ENCODE measurements at regions of chr3 and their contacts with region 1.

Region 1: GRCh38 chr3:39288300-39288808 is 8.5 kb upstream of the CX3CR1 start:
- DNase-seq: peak; percentile 91
- H3K4me3 Mint-ChIP-seq: no peak overlapping the region
- H3K27ac Mint-ChIP-seq: no peak overlapping the region
- H3K4me1 Mint-ChIP-seq: peaks cover 12% of the 10 kb centered on the region
- H3K27me3 Mint-ChIP-seq: no peaks in the 10 kb centered on the region

Region 2: DNA sequence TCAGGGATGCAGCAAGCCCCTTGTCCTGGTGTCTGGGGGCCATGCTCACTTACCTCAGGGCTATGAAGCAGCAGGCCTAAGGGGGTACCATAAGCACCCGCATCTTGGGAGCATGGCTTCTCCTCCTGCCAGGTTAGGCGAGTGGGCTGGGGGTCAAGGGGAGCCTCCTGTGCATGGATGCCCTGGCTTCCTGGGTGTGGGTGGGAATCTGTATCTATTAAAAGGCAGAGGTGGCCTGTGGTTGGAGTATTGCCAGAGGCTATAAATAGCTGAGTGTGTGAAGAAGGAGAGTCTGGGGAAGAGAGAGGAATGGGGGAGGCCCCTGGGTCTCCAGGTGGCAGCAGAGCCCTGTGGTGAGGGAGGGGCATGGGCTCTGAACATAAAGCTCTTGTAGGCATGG is 815.1 kb before region 1 on chr3:
- CTCF ChIA-PET with region 1: no interaction called
- intact Hi-C with region 1: no loop called
- DNase-seq: no peak
- H3K4me3 Mint-ChIP-seq: no peak overlapping the region
- H3K27ac Mint-ChIP-seq: no peak overlapping the region
- H3K4me1 Mint-ChIP-seq: peaks cover 8% of the 10 kb centered on the region
- H3K27me3 Mint-ChIP-seq: no peaks in the 10 kb centered on the region

Region 3: GRCh38 chr3:38782148-38782547 is 506.2 kb before region 1 on chr3:
- CTCF ChIA-PET with region 1: no interaction called
- intact Hi-C with region 1: no loop called
- DNase-seq: no peak
- H3K4me3 Mint-ChIP-seq: no peak overlapping the region
- H3K27ac Mint-ChIP-seq: no peak overlapping the region
- H3K4me1 Mint-ChIP-seq: no peaks in the 10 kb centered on the region
- H3K27me3 Mint-ChIP-seq: peaks cover 4% of the 10 kb centered on the region

Region 4: GRCh38 chr3:39000008-39000450 is 288.3 kb before region 1 on chr3:
- CTCF ChIA-PET with region 1: interaction called, 3 read pairs
- intact Hi-C with region 1: loop called (anchors 1 kb)
- DNase-seq: no peak
- H3K4me3 Mint-ChIP-seq: no peak overlapping the region
- H3K27ac Mint-ChIP-seq: no peak overlapping the region
- H3K4me1 Mint-ChIP-seq: no peaks in the 10 kb centered on the region
- H3K27me3 Mint-ChIP-seq: no peaks in the 10 kb centered on the region

Region 5: DNA sequence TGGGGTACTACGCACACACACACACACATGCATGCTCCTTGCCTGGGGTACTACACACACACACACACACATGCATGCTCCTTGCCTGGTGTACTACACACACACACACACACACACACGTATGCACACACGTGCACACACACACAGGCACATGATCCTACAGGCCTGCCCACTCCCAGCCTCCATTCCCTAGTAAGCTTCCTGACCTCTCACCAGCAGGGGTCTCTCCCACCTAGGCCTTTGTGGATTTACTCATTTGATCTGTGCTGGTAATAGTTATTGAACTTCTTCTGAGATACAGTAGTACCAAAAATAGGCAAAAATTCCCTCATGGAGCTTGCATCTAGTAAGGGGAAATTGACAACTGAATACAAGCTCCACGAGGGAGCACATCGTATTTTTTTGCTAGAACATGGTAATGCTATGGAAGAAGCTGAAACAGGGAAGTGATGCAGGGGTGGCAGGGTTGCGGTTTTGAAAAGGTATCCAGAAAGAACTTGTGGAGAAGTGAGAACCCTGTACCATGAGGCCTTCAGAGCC is 161.8 kb before region 1 on chr3:
- CTCF ChIA-PET with region 1: interaction called, 169 read pairs
- intact Hi-C with region 1: loop called (anchors 1 kb)
- DNase-seq: peak; percentile 80
- H3K4me3 Mint-ChIP-seq: no peak overlapping the region
- H3K27ac Mint-ChIP-seq: no peak overlapping the region
- H3K4me1 Mint-ChIP-seq: peaks cover 18% of the 10 kb centered on the region
- H3K27me3 Mint-ChIP-seq: no peaks in the 10 kb centered on the region

Region 6: DNA sequence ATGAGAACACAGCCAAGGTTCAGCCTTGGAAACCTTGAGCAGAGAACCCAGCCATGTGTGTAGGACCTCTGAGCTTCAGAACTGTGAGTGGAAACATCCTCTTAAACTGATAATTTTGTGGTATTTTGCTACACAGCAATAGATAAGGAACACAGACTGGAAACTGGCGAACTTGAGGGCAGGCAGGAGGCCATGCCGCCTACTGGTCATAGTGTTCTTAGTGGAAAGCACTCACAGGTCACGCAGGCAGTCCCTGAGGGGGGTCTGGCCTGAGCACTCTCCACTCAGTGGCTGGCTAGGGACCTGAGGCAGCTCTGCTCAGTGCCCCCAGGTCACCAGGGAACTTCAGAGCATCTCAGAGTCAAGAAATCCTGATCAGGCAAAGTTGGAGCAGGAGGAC is 86.3 kb before region 1 on chr3:
- CTCF ChIA-PET with region 1: interaction called, 29 read pairs
- intact Hi-C with region 1: no loop called
- DNase-seq: no peak
- H3K4me3 Mint-ChIP-seq: no peak overlapping the region
- H3K27ac Mint-ChIP-seq: no peak overlapping the region
- H3K4me1 Mint-ChIP-seq: peaks cover 2% of the 10 kb centered on the region
- H3K27me3 Mint-ChIP-seq: no peaks in the 10 kb centered on the region

Region 7: DNA sequence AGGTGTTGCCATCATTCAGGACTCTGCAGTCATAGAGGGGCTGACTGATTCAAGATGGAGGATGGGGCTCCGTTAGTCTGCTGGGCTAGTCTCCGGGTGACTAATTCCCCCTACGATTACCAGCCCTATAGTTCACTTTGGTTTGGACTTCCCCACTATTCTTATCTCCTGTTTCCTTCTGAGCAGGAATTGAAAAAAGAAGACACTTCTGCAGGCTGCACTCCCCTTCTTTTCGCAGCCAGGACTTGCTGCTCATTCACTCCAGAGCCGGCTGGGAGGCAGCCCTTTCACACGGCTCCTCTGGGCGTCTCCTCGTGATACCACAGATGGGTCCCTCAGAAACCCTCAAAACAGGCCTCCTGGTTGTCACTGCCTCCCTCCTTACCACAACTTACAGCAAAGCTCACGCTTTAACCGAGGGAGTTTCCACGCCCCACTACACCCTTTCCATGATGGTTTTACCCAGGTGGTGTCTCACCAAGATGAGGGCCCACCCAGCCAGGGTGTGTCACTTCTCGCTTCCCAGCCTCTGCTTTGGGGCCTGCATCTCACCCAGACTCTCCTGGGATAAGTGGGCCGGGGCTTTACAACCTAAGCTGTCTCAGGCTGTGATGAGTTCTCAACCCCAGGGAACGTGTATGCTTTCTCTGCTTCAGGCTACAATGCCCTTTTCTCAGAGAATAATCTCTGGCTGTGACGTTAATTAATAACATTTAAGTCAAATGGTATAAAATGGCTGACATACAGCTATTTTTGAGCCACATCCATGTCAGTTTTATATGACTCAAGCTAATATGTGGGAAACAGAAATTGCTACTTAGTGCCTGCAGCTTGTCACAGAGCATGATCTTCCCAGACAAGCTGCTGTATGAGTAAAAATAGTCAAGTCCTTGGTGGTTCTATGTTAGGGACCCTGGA is 20.5 kb before region 1 on chr3:
- CTCF ChIA-PET with region 1: interaction called, 40 read pairs
- intact Hi-C with region 1: loop called (anchors 1 kb)
- DNase-seq: peak; percentile 83
- H3K4me3 Mint-ChIP-seq: peak overlapping the region; percentile 39
- H3K27ac Mint-ChIP-seq: peak overlapping the region; percentile 92
- H3K4me1 Mint-ChIP-seq: peaks cover 25% of the 10 kb centered on the region
- H3K27me3 Mint-ChIP-seq: no peaks in the 10 kb centered on the region

Region 8: GRCh38 chr3:39346785-39347585 is 58.6 kb after region 1 on chr3:
- CTCF ChIA-PET with region 1: interaction called, 21 read pairs
- intact Hi-C with region 1: no loop called
- DNase-seq: peak; percentile 20
- H3K4me3 Mint-ChIP-seq: no peak overlapping the region
- H3K27ac Mint-ChIP-seq: peak overlapping the region; percentile 37
- H3K4me1 Mint-ChIP-seq: peaks cover 43% of the 10 kb centered on the region
- H3K27me3 Mint-ChIP-seq: no peaks in the 10 kb centered on the region

Region 9: DNA sequence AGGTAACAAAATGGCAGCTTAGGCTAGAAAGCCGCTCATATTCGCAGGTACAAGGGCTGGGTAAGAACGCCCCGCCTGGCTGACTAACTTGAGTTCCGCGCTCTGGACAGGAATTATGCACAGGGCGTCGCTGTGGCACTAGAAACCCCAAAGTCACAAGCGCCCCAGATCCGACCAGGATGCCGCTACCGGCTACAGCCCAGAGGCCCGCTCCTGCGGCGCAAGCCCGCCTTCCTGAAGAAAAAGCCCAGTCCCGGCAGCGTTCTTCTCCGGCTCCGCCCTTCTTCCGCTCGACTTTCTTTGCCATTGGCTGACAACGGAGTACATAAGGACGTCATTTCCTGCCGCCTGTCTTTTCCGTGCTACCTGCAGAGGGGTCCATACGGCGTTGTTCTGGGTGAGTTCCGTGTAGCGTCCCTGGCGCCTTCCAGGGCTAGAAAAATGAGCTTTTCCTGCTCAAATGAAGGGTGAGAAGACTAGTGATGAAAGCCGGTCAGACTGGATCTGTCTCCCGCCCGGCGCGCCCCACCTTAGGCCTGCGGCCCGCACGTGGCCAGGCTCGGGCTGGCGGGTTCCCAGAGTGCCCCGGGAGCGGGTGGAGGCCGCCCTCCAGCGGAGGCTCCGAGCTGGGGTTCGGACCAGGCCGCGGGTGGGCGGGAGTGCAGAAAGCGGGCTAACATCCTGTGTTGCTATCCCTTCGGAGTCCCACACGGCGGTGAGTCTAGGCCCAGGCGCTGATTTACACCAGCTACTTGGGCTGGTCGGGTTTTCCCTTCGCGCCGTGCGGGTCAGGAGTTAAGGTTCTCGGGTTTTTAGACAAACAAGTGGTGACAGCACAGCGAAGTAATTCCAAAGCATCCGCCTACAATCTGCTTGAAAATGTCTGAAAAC is 118.3 kb after region 1 on chr3 and contains the start of gene RPSA:
- CTCF ChIA-PET with region 1: interaction called, 12 read pairs
- intact Hi-C with region 1: no loop called
- DNase-seq: peak; percentile 98
- H3K4me3 Mint-ChIP-seq: peak within 1 kb of the TSS; percentile 94
- H3K27ac Mint-ChIP-seq: peak within 1 kb of the TSS; percentile 96
- H3K4me1 Mint-ChIP-seq: peaks cover 41% of the 10 kb centered on the region
- H3K27me3 Mint-ChIP-seq: no peaks in the 10 kb centered on the region
- total RNA-seq, gene RPSA: 3,309 to 3,414 TPM